ENCODE measurements at regions of chr2 and their contacts with region 1.

Region 1: GRCh38 chr2:237691908-237692600 is 64.7 kb downstream of the LRRFIP1 start:
- DNase-seq: peak; percentile 85 to 98 (median 91)
- ATAC-seq: peak; percentile 66 to 77 (median 76)
- H3K4me3 ChIP-seq: peak overlapping the region; percentile 82 to 93
- H3K4me3 Mint-ChIP-seq: peak overlapping the region; percentile 84 to 89 (median 87)
- H3K27ac ChIP-seq: peak overlapping the region; percentile 95
- H3K27ac Mint-ChIP-seq: peak overlapping the region; percentile 93 to 97
- H3K4me1 ChIP-seq: peaks cover 46 to 77% of the 10 kb centered on the region in 2 experiments
- H3K4me1 Mint-ChIP-seq: peaks cover 77 to 82% (median 80%) of the 10 kb centered on the region in 3 donors
- H3K27me3 ChIP-seq: no peaks in the 10 kb centered on the region
- H3K27me3 Mint-ChIP-seq: no peaks in the 10 kb centered on the region

Region 2: GRCh38 chr2:237601453-237602116 is 90.5 kb before region 1 on chr2:
- CTCF ChIA-PET with region 1: no interaction called
- POLR2A ChIA-PET with region 1: interaction called, 3 to 13 read pairs
- DNase-seq: no peak
- ATAC-seq: no peak
- H3K4me3 ChIP-seq: no peak overlapping the region
- H3K4me3 Mint-ChIP-seq: no peak overlapping the region
- H3K27ac ChIP-seq: no peak overlapping the region
- H3K27ac Mint-ChIP-seq: peak overlapping the region in 1 of 2 donors; percentile 17
- H3K4me1 ChIP-seq: peaks cover 8 to 28% of the 10 kb centered on the region in 2 experiments
- H3K4me1 Mint-ChIP-seq: peaks cover 22 to 35% (median 24%) of the 10 kb centered on the region in 3 donors
- H3K27me3 ChIP-seq: peaks cover 0 to 3% of the 10 kb centered on the region in 2 experiments
- H3K27me3 Mint-ChIP-seq: no peaks in the 10 kb centered on the region

Region 3: DNA sequence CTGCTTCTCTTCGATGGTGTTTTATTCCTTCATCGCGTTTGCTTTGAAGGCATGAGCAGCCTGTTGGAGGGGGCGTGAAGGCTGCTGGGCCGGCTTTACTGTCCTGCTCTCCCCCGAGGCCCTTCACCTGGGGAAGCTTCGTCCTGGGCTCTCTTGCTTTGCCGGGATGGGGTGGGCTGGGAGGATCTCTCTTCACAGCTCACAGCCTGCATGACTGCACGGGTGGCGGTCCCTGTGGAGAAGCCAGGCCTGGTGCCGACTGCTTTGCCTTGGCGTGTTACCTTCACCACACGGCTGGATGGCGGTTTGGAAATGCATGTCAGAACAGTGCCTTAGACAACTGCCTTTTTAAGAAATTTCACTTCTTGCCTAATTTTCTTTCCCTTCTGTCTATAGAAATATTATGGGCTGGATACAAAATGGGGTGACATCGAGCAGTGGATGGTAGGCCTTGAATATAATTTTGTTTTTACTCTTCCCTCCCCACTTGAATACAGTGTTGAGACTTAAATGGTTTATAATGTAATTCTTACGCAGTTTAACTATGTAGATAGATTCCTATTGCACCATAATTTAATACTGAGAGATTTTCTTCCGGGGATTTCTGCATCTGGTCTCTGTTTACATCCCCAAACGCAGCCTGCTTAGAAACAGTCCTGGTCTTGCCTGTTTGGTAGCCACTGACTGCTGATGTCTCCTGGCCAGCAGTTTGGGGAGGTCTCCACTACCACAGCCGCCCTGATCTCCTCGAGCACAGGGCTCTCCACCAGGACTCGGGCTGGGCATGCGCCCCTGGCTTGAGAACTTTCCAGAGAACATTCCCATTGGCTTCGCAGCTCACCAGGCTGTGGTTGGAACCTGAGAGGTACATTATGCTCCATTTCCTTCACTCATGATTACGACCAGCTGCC is 25.6 kb after region 1 on chr2:
- CTCF ChIA-PET with region 1: interaction called, 5 to 11 read pairs
- POLR2A ChIA-PET with region 1: no interaction called
- DNase-seq: no peak
- ATAC-seq: no peak
- H3K4me3 ChIP-seq: no peak overlapping the region
- H3K4me3 Mint-ChIP-seq: no peak overlapping the region
- H3K27ac ChIP-seq: no peak overlapping the region
- H3K27ac Mint-ChIP-seq: no peak overlapping the region
- H3K4me1 ChIP-seq: peaks cover 2 to 18% of the 10 kb centered on the region in 2 experiments
- H3K4me1 Mint-ChIP-seq: peaks cover 76 to 88% (median 83%) of the 10 kb centered on the region in 3 donors
- H3K27me3 ChIP-seq: no peaks in the 10 kb centered on the region
- H3K27me3 Mint-ChIP-seq: no peaks in the 10 kb centered on the region

Region 4: DNA sequence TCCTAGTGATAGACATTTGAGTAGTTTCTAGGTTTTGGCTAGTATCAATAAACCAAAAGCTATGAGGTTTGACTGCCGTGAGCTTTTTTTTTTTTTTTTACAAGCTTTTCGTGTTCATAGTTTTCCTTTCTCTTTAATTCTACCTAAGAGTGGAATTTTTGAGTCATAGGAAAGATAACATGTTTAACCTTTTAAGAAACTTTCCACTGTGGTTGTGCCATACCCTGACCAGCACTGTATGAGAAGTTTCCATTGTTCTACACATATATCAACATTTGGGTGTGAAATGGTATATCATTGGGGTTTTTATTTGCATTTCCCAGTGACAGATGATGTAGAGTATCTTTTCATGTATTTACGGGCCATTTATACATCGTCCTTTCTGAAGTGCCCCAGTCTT is 306.5 kb after region 1 on chr2:
- CTCF ChIA-PET with region 1: no interaction called
- POLR2A ChIA-PET with region 1: no interaction called
- DNase-seq: peak in 1 of 35 experiments; percentile 50
- ATAC-seq: peak; percentile 20 to 58 (median 44)
- H3K4me3 ChIP-seq: no peak overlapping the region
- H3K4me3 Mint-ChIP-seq: peak overlapping the region; percentile 54 to 68 (median 65)
- H3K27ac ChIP-seq: peak overlapping the region; percentile 54
- H3K27ac Mint-ChIP-seq: peak overlapping the region; percentile 88 to 89
- H3K4me1 ChIP-seq: peaks cover 13 to 18% of the 10 kb centered on the region in 2 experiments
- H3K4me1 Mint-ChIP-seq: peaks cover 37 to 46% (median 39%) of the 10 kb centered on the region in 3 donors
- H3K27me3 ChIP-seq: no peaks in the 10 kb centered on the region
- H3K27me3 Mint-ChIP-seq: no peaks in the 10 kb centered on the region

Region 5: GRCh38 chr2:238093181-238094140 is 401.4 kb after region 1 on chr2:
- CTCF ChIA-PET with region 1: no interaction called
- POLR2A ChIA-PET with region 1: no interaction called
- DNase-seq: no peak
- ATAC-seq: no peak
- H3K4me3 ChIP-seq: no peak overlapping the region
- H3K4me3 Mint-ChIP-seq: no peak overlapping the region
- H3K27ac ChIP-seq: no peak overlapping the region
- H3K27ac Mint-ChIP-seq: no peak overlapping the region
- H3K4me1 ChIP-seq: no peaks in the 10 kb centered on the region
- H3K4me1 Mint-ChIP-seq: no peaks in the 10 kb centered on the region
- H3K27me3 ChIP-seq: no peaks in the 10 kb centered on the region
- H3K27me3 Mint-ChIP-seq: no peaks in the 10 kb centered on the region